ENCODE measurements at regions of chr1 and their contacts with region 1.

Region 1: DNA sequence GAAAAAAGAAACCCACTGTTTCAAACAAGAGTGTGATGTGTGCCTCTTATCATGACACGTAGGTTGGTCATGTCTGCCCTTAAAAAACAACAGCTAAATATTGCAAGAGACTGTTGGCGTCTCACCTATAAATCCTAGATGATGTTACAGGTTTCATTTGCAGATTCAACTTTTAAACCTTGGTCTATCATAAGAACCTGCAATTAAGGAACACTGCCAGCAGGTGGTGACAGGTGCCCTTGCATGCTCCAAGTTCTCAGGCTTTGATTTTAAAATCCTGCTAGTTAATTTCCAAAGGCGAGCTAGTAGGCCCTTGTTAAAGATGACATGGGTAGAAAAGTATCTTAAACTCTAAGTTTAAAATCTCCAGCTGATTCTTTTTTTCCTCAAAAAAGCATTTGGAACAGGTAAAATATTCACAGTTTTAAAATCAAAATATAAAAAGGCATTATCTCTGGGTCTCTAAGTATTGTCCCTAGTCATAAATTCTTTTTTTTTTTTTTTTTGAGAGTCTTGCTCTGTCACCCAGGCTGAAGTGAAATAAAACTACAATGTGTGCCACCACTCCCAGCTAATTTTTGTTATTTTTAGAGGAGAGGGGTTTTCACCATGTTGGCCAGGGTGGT is 39.1 kb downstream of the CLSTN1 start:
- DNase-seq: peak; percentile 81 to 88 (median 83)
- H3K4me3 ChIP-seq: no peak overlapping the region
- H3K27ac ChIP-seq: no peak overlapping the region
- H3K4me1 ChIP-seq: peaks cover 0 to 9% (median 8%) of the 10 kb centered on the region in 4 experiments
- H3K27me3 ChIP-seq: no peaks in the 10 kb centered on the region

Region 2: GRCh38 chr1:9805006-9805508 is 20.4 kb after region 1 on chr1:
- CTCF ChIA-PET with region 1: interaction called, 22 read pairs
- POLR2A ChIA-PET with region 1: no interaction called
- DNase-seq: no peak
- H3K4me3 ChIP-seq: no peak overlapping the region
- H3K27ac ChIP-seq: no peak overlapping the region
- H3K4me1 ChIP-seq: peaks cover 0 to 8% (median under 1%) of the 10 kb centered on the region in 4 experiments
- H3K27me3 ChIP-seq: no peaks in the 10 kb centered on the region

Region 3: DNA sequence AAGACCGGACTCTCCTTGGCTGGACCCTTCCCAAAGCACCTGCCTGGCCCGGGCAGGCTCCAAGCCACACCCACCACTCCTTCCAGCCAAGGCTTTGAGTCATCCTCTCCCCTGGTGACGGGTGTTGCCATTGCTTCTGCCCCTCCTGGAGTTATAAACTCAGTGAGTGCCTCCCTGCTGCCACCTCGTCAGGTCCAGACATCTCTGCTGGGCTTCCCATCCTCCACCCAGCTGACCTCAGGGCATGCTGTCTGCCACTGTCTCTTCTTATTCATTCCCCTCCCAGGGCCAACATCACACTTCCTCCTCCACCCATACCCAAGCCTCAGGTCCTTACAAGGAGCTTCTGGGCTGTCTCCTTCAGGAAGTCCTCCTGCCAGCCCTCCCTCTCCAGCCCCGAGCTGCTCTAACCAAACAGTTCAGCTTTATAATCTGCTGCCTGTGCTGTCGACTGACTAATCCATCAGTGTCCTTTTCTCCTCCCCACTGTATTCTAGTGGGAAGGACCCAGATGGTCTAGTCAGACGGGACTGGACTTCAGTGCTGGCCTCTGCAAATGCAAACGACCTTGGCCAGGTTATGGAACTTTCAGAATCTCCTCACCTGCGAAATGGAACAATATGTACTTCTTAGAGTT is 41.0 kb after region 1 on chr1:
- CTCF ChIA-PET with region 1: interaction called, 12 read pairs
- POLR2A ChIA-PET with region 1: no interaction called
- DNase-seq: peak; percentile 38 to 70 (median 60)
- H3K4me3 ChIP-seq: peak overlapping the region in 3 of 7 experiments; percentile 24 to 43 (median 26)
- H3K27ac ChIP-seq: no peak overlapping the region
- H3K4me1 ChIP-seq: peaks cover 8 to 38% (median 34%) of the 10 kb centered on the region in 4 experiments
- H3K27me3 ChIP-seq: no peaks in the 10 kb centered on the region

Region 4: GRCh38 chr1:9852410-9853248 is 68.0 kb after region 1 on chr1:
- CTCF ChIA-PET with region 1: interaction called, 11 read pairs
- POLR2A ChIA-PET with region 1: no interaction called
- DNase-seq: peak; percentile 20 to 40 (median 34)
- H3K4me3 ChIP-seq: peak overlapping the region in 3 of 7 experiments; percentile 2 to 87 (median 28)
- H3K27ac ChIP-seq: no peak overlapping the region
- H3K4me1 ChIP-seq: peaks cover 5 to 54% (median 38%) of the 10 kb centered on the region in 4 experiments
- H3K27me3 ChIP-seq: no peaks in the 10 kb centered on the region

Measured in common myeloid progenitor, CD34-positive (primary cell).